ENCODE measurements at regions of chr2 and their contacts with region 1.

Region 1: GRCh38 chr2:149313512-149313972 is 16.8 kb upstream of the LYPD6 start:
- DNase-seq: no peak
- H3K4me3 ChIP-seq: no peak overlapping the region
- H3K27ac ChIP-seq: no peak overlapping the region
- H3K4me1 ChIP-seq: no peaks in the 10 kb centered on the region
- H3K27me3 ChIP-seq: no peaks in the 10 kb centered on the region
- CTCF ChIP-seq: peak in 2 of 3 experiments; percentile 61 to 65

Region 2: DNA sequence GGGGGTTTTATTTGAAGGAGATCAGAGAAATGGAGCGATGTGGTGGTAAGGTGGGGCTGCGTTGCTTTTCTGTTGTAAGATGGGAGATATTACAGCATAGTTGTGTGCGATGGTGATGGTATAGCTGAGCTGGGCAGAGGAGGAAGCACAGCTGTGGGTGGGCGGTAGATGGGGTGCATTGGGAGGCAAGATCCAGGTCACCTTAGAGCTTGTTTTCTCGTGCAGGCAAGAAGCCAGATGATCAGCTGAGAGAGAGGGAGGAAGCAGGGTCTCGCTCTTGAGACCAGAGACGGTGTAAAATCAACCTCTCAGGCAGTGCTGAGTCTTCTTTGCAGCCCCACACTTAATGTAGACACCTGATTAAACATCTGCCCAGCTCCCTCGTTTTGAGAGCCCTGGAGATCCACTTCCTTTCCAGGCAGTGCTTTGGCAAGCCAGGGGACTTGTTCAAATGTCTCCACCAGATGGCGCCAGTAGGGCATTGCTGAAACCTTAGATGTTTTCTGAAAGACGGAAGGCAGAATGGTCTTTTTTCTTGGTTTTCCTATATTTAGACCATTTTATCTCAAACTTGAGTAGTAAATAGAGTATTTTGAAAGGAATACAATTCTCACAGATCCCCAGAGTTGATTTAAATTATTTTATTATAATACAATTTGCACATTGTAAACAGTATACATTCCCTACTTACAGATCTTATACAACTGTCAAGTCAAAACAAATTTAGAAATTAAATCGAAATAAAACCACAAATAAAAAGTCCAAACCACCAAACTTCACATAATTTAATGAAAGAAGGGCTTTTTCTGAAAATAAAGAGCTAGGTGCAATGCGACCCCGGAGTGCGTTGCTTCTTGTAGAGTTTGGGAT is 296.2 kb before region 1 on chr2:
- intact Hi-C with region 1: loop called (anchors 5 kb)
- DNase-seq: peak in 1 of 2 donors; percentile 82
- H3K4me3 ChIP-seq: no peak overlapping the region
- H3K27ac ChIP-seq: no peak overlapping the region
- H3K4me1 ChIP-seq: peaks cover 0 to 5% of the 10 kb centered on the region in 2 donors
- H3K27me3 ChIP-seq: no peaks in the 10 kb centered on the region
- CTCF ChIP-seq: peak; percentile 54 to 88 (median 65)

Region 3: DNA sequence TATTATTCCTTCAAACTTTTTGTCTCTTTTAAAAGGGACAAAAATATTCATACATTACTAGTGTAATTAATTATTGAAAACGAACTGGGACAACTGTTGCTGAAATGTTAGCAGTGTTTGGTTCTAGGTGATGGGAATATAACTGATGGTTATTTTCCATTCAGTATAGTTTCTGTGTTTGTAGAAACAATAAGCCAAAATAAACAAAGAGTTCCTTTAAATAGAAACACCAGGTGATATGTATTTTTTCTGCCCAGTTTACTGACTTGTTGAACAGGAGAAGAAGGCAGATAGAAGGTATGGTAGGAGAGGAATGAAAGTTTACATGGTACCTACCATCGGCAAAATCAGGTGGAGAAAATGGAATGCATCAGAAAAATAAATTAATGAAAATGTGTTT is 200.8 kb before region 1 on chr2:
- intact Hi-C with region 1: no loop called
- DNase-seq: no peak
- H3K4me3 ChIP-seq: no peak overlapping the region
- H3K27ac ChIP-seq: no peak overlapping the region
- H3K4me1 ChIP-seq: no peaks in the 10 kb centered on the region
- H3K27me3 ChIP-seq: no peaks in the 10 kb centered on the region
- CTCF ChIP-seq: no peak